Sigmoid colon (tissue), 7 donors: ENCODE measurements at regions of chr10 and their contacts with region 1.

Region 1: GRCh38 chr10:69333205-69333604 is 54.9 kb downstream of the HK1 start:
- DNase-seq: peak; percentile 78
- H3K4me3 ChIP-seq: peak overlapping the region in 1 of 4 donors; percentile 3
- H3K27ac ChIP-seq: peak overlapping the region; percentile 79 to 91 (median 82)
- H3K4me1 ChIP-seq: peaks cover 0 to 89% (median 79%) of the 10 kb centered on the region in 4 donors
- H3K27me3 ChIP-seq: no peaks in the 10 kb centered on the region
- CTCF ChIP-seq: peak; percentile 23 to 67 (median 37)
- EP300 ChIP-seq: peak in 1 of 4 donors; percentile 31
- POLR2A ChIP-seq: no peak

Region 2: DNA sequence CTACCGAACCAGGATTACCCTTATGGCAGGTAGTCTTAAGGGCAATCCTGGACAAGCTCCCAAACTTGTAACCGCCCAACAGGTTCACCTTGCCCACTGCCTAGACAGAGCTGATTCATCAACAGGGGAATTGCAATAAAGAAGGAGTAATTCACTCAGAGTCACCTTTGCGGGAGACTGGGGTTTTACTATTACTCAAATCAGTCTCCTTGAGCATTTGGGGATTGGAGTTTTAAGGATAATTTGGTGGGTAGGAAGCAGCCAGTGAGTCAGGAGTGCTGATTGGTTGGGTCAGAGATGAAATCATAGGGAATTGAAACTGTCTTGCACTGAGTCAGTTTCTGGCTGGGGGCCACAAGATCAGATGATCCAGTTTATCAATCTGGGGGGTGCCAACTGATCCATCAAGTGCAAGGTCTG is 29.6 kb before region 1 on chr10:
- intact Hi-C with region 1: no loop called
- DNase-seq: no peak
- H3K4me3 ChIP-seq: no peak overlapping the region
- H3K27ac ChIP-seq: no peak overlapping the region
- H3K4me1 ChIP-seq: no peaks in the 10 kb centered on the region
- H3K27me3 ChIP-seq: no peaks in the 10 kb centered on the region
- CTCF ChIP-seq: no peak
- EP300 ChIP-seq: no peak
- POLR2A ChIP-seq: no peak

Region 3: GRCh38 chr10:69375307-69376151 is 42.3 kb after region 1 on chr10:
- intact Hi-C with region 1: loop called (anchors 5 kb)
- DNase-seq: peak; percentile 82
- H3K4me3 ChIP-seq: peak overlapping the region in 2 of 4 donors; percentile 9 to 24
- H3K27ac ChIP-seq: peak overlapping the region; percentile 72 to 86 (median 73)
- H3K4me1 ChIP-seq: peaks cover 0 to 36% (median 30%) of the 10 kb centered on the region in 4 donors
- H3K27me3 ChIP-seq: no peaks in the 10 kb centered on the region
- CTCF ChIP-seq: no peak
- EP300 ChIP-seq: no peak
- POLR2A ChIP-seq: no peak

Region 4: DNA sequence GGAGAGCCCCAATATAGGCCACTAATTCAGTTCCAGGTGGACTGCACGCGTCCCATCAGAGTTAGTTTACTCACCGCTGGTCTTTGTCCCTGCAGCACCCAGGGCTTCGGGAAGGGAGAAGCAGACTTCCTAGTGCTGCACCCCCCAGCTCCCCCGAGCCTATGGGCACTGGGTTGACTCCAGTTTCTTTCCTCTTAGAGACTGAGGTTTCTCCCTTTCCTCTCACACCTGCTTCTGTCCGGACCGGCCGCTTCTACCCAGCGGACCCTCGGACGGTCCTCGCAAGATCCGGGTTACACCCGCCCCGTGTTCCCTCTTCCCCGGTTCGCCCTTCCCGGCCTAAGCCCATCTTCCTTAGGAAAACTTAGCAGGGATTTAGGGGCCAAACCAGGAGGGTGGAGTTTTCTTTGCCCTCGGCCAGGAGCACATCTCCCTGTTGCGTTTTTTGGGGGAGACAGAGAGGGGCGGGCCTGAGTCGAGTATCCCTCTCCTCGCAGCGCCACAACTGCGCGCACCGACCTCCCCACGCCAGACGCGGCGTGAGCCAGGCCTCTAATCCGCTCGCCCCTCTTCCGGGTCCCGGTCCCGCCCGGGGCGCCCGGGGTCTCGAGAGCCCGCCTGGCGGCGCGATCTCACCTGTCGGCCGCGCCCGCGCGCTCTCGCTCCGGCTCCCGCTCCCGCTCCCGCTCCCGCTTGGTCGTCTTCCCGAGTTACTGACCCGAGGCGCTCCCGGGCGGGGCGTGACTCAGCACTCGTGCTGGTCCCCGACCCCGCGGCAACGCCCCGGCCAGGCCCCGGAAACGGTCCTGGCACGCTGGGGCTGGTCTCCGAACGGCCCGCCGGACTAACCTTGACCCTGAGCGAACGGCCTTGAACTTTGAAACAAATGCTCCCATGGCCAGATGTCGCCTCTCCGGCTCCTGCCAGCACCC is 799.2 kb after region 1 on chr10 and contains the start of gene AIFM2:
- intact Hi-C with region 1: no loop called
- DNase-seq: peak; percentile 93
- H3K4me3 ChIP-seq: peak within 1 kb of the TSS; percentile 48 to 76 (median 60)
- H3K27ac ChIP-seq: peak within 1 kb of the TSS; percentile 77 to 83 (median 80)
- H3K4me1 ChIP-seq: peaks cover 0 to 21% (median 18%) of the 10 kb centered on the region in 4 donors
- H3K27me3 ChIP-seq: no peaks in the 10 kb centered on the region
- CTCF ChIP-seq: no peak
- EP300 ChIP-seq: peak in 2 of 4 donors; percentile 13 to 14
- POLR2A ChIP-seq: peak in 1 of 2 donors; percentile 10
- total RNA-seq, gene AIFM2: 10.2 to 11.7 (median 10.8) TPM